ENCODE measurements at regions of chr20 and their contacts with region 1.

Region 1: DNA sequence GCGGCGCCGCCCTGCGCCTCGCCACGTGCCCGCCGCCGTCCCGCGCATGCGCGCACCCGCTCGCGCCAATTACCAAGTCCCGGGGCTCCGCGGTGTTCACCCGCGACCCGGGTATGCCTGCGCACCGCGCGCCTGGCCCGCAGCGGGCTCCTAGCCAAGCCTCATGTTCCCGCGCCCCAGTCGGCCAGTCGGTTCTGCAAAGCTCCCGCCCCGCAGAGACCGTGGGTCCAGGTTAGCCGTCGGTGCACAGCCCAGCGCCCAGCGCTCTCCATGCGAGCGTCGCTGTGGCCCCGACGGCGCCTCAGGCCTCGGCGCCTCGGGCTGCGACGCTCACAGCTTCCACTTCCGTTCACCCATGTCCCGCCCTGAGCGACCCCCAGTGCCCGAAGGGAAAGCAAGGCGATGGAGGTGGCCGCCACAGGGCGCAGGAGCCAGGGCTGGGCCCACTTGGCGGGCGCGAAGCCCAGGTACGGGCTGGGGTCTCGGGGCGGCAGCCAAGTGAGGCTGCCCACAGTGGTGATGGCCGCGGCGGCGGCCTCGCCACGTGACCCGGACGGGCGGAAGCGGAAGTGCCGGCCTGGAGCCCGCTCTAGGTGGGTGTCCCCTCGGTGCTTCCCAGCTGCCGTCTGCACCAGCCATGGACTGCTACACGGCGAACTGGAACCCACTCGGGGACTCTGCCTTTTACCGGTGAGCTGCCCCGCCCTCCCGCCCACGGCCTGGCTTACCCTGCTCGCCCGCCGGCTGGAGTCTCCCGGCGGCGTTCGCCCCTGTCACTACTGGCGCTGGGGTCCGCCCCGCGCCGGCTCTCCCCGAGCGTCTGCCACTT is at the starts of genes PCED1A and VPS16:
- DNase-seq: peak; percentile 94
- H3K27ac ChIP-seq: peak within 1 kb of the TSS; percentile 82
- CTCF ChIP-seq: no peak

Region 2: GRCh38 chr20:2851086-2851485 is 10.7 kb after region 1 on chr20:
- CTCF ChIA-PET with region 1: interaction called, 11 read pairs
- POLR2A ChIA-PET with region 1: no interaction called
- DNase-seq: no peak
- H3K27ac ChIP-seq: no peak overlapping the region
- CTCF ChIP-seq: no peak

Region 3: GRCh38 chr20:2879146-2879545 is 38.8 kb after region 1 on chr20:
- CTCF ChIA-PET with region 1: no interaction called
- POLR2A ChIA-PET with region 1: no interaction called
- DNase-seq: peak; percentile 70
- H3K27ac ChIP-seq: peak overlapping the region; percentile 42
- CTCF ChIP-seq: no peak